ENCODE measurements at regions of chr15 and their contacts with region 1.

Region 1: DNA sequence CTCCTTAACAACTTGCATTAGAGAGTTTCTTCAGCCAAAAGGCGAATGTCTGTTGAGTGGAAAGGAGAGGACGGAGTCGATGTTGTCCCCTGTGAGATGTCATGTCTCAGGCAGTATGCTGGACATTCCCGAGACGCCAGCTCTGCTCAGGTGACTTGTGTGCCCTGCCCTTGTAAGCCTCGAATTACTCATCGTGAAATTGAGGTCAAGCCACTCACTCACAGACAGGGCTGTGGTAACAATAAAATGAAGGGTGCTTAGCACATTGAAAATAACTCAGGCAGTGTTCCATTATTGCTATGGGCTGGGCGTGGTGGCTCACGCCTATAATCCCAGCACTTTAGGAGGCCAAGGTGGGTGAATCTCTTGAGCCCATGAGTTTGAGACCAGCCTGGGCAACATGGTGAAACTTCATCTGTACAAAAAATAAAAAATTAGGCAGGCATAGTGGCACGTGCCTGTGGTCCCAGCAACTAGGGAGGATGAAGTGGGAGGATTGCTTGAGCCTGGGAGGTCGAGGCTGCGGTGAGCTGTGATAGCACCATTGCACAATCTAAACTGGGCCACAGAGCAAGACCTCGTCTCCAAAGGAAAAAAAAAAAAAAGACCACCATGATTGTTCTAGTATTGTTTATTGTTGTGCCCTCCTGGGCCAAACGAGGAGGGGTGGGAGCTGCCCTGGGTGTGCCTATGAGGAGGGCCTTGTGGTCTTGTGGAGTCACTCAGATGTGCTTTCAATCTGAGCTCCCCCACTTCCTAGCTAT is 214.4 kb downstream of the THSD4 start:
- DNase-seq: peak; percentile 60 to 75
- H3K4me3 ChIP-seq: no peak overlapping the region
- H3K27ac ChIP-seq: peak overlapping the region; percentile 34
- H3K4me1 ChIP-seq: peaks cover 38% of the 10 kb centered on the region
- H3K27me3 ChIP-seq: no peaks in the 10 kb centered on the region
- CTCF ChIP-seq: no peak

Region 2: GRCh38 chr15:70625438-70625837 is 704.2 kb before region 1 on chr15:
- CTCF ChIA-PET with region 1: no interaction called
- POLR2A ChIA-PET with region 1: no interaction called
- intact Hi-C with region 1: no loop called
- DNase-seq: no peak
- H3K4me3 ChIP-seq: no peak overlapping the region
- H3K27ac ChIP-seq: no peak overlapping the region
- H3K4me1 ChIP-seq: no peaks in the 10 kb centered on the region
- H3K27me3 ChIP-seq: no peaks in the 10 kb centered on the region
- CTCF ChIP-seq: no peak

Region 3: GRCh38 chr15:71364117-71364584 is 34.5 kb after region 1 on chr15:
- CTCF ChIA-PET with region 1: no interaction called
- POLR2A ChIA-PET with region 1: no interaction called
- intact Hi-C with region 1: no loop called
- DNase-seq: no peak
- H3K4me3 ChIP-seq: no peak overlapping the region
- H3K27ac ChIP-seq: no peak overlapping the region
- H3K4me1 ChIP-seq: no peaks in the 10 kb centered on the region
- H3K27me3 ChIP-seq: no peaks in the 10 kb centered on the region
- CTCF ChIP-seq: no peak

Region 4: DNA sequence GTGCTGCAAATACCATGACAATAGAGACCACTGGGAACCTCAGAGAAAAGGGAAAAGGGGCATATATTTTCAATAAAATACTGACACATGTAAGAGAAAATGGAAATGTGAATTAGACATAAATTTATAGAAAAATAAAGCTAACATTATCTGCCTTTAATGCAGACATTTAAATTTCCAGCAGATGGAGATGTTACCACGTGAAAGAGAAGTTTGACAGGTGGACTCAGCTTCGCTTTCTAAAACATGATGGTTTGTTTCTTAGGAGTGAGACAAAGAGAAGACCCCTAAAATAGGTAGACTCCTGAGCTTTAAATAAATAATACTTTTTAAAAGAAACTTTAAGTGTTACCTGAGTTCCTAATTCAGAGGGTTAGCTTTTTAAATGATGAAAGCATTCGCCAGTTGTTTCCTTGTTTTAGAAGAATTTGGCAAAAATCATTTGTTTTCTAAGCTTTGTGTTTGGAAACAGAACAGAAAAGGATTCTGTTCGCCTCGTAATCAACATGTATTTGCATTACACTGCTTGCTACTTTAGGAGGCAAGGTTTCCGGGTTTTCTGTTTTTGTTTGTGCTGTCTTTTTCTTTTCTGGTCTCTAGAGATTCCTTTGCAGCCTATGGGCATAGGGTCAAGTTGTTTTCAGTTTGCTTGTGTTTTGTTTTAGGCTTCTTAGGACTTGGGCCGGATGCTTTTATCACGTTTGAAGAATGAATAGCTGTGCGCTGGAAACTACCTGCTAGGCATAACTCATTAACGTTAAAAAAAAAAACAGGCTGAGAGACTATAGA is 57.0 kb after region 1 on chr15:
- CTCF ChIA-PET with region 1: no interaction called
- POLR2A ChIA-PET with region 1: no interaction called
- intact Hi-C with region 1: no loop called
- DNase-seq: no peak
- H3K4me3 ChIP-seq: no peak overlapping the region
- H3K27ac ChIP-seq: no peak overlapping the region
- H3K4me1 ChIP-seq: 0 out of 2 replicates have a peak, but pooled peaks cover 7% of the 10 kb centered on the region
- H3K27me3 ChIP-seq: no peaks in the 10 kb centered on the region
- CTCF ChIP-seq: peak; percentile 59

Region 5: GRCh38 chr15:71424765-71425164 is 95.1 kb after region 1 on chr15:
- CTCF ChIA-PET with region 1: no interaction called
- POLR2A ChIA-PET with region 1: no interaction called
- intact Hi-C with region 1: no loop called
- DNase-seq: no peak
- H3K4me3 ChIP-seq: no peak overlapping the region
- H3K27ac ChIP-seq: no peak overlapping the region
- H3K4me1 ChIP-seq: no peaks in the 10 kb centered on the region
- H3K27me3 ChIP-seq: no peaks in the 10 kb centered on the region
- CTCF ChIP-seq: no peak

Region 6: DNA sequence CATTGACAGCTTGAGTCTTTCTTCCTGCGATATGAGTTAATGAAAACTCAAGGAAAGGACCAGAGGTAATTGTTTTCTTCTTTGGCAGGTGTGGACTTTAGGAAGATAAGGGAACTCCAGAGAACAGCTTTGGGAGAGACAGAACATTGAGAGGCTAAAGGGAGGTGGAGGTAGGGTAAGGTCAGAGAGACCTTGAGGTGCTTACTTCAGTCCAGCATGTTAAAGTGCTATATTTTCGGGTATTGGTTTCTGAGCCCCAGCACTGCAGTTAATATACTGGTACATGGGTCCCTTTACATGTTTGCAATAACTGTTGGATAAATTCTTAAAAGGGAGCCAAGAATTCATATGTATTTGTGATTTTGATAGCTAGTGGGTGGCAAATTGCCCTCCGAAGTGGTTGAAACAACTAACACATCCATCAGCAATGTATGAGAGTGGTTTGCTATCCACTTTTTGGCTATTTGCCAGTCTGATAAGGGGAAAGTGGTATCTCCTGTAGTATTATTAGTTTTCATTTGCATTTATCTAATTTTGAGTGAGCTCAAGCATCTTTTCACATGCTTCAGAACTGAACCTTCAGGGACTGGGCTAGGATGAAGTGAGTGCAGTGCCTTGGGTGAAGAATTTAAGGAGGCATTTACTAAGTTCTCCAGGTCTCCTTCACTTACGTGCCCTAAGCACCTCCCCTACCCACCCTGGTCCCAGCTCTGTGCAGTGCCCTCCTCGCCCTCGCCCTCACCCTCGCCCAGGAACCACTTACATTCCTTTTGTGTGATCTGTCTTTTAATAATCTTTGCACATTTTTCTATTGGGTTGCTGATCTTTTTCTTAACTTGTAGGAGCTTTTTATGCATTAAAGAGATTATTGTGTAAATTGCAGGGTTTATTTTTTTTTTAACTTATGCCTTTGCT is 108.0 kb after region 1 on chr15:
- CTCF ChIA-PET with region 1: no interaction called
- POLR2A ChIA-PET with region 1: no interaction called
- intact Hi-C with region 1: loop called (anchors 10 kb)
- DNase-seq: peak; percentile 48 to 56
- H3K4me3 ChIP-seq: no peak overlapping the region
- H3K27ac ChIP-seq: peak overlapping the region; percentile 40
- H3K4me1 ChIP-seq: peaks cover 30% of the 10 kb centered on the region
- H3K27me3 ChIP-seq: no peaks in the 10 kb centered on the region
- CTCF ChIP-seq: no peak

Measured in PC-9 (cell line).